IMR-90 (cell line): ENCODE measurements at regions of chr16 and their contacts with region 1.

Region 1: GRCh38 chr16:20271893-20272292 is 55.4 kb downstream of the GP2 start:
- DNase-seq: no peak
- ATAC-seq: no peak
- H3K4me3 ChIP-seq: no peak overlapping the region
- H3K27ac ChIP-seq: no peak overlapping the region
- H3K4me1 ChIP-seq: no peaks in the 10 kb centered on the region
- H3K27me3 ChIP-seq: no peaks in the 10 kb centered on the region
- CTCF ChIP-seq: no peak
- POLR2A ChIP-seq: no peak
- RAD21 ChIP-seq: no peak

Region 2: GRCh38 chr16:20146759-20147490 is 125.0 kb before region 1 on chr16:
- CTCF ChIA-PET with region 1: no interaction called
- POLR2A ChIA-PET with region 1: no interaction called
- dilution Hi-C with region 1: no loop called
- in situ Hi-C with region 1: no loop called
- intact Hi-C with region 1: no loop called
- DNase-seq: no peak
- ATAC-seq: no peak
- H3K4me3 ChIP-seq: no peak overlapping the region
- H3K27ac ChIP-seq: no peak overlapping the region
- H3K4me1 ChIP-seq: no peaks in the 10 kb centered on the region
- H3K27me3 ChIP-seq: no peaks in the 10 kb centered on the region
- CTCF ChIP-seq: no peak
- POLR2A ChIP-seq: no peak
- RAD21 ChIP-seq: no peak

Region 3: GRCh38 chr16:20216591-20217217 is 55.2 kb before region 1 on chr16:
- CTCF ChIA-PET with region 1: no interaction called
- POLR2A ChIA-PET with region 1: no interaction called
- dilution Hi-C with region 1: no loop called
- in situ Hi-C with region 1: loop called (anchors 10 kb)
- intact Hi-C with region 1: no loop called
- DNase-seq: no peak
- ATAC-seq: no peak
- H3K4me3 ChIP-seq: no peak overlapping the region
- H3K27ac ChIP-seq: no peak overlapping the region
- H3K4me1 ChIP-seq: no peaks in the 10 kb centered on the region
- H3K27me3 ChIP-seq: no peaks in the 10 kb centered on the region
- CTCF ChIP-seq: no peak
- POLR2A ChIP-seq: no peak
- RAD21 ChIP-seq: no peak